ENCODE measurements at regions of chr1 and their contacts with region 1.

Region 1: DNA sequence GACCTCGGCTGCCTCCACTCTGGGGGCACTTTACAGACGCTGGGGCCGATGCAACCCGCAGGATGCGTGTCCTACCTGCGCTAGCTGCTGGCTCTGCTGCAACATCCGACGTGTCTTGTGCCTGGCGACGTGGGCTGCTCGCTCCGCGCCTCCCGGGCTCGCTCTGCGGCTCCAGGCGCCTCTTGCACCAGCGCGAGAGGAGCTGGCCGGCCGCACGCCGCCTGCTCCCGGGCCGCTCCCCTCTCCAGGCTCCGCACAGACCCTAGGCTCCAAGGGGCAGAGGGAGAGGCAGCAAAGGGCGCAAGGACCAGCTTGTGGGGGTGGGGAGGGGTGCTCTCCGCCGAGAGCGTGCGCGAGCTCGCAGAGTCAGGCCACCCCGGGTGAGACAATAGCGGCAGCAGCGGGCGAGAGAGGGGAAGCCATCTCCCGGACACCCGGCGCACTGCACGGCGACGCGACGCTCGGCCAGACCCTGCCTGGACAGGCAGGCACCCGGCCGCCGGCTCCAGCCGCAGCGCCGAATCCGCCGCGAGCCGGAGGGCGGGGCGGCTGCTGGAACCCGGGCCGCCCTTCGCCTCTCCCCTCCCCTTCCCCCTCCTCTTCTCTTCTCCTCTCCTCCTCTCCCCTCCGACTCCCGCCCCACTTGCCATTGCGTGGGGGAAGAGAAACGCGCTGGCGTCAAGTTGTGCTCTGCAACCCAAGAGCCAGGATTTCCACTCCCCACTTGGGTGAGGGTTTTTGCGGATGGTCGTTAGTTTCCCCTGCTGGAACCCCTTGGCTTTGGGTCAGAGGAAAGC is at the start of gene PIK3C2B:
- DNase-seq: peak; percentile 80 to 84
- H3K4me3 ChIP-seq: peak within 1 kb of the TSS; percentile 94
- H3K27ac ChIP-seq: peak within 1 kb of the TSS; percentile 92
- H3K4me1 ChIP-seq: peaks cover 34% of the 10 kb centered on the region
- H3K27me3 ChIP-seq: no peaks in the 10 kb centered on the region
- CTCF ChIP-seq: peak; percentile 55; the same call in 1 of the 2 replicates
- total RNA-seq, gene PIK3C2B: 51.6 and 52.4 TPM in 2 replicates

Region 2: DNA sequence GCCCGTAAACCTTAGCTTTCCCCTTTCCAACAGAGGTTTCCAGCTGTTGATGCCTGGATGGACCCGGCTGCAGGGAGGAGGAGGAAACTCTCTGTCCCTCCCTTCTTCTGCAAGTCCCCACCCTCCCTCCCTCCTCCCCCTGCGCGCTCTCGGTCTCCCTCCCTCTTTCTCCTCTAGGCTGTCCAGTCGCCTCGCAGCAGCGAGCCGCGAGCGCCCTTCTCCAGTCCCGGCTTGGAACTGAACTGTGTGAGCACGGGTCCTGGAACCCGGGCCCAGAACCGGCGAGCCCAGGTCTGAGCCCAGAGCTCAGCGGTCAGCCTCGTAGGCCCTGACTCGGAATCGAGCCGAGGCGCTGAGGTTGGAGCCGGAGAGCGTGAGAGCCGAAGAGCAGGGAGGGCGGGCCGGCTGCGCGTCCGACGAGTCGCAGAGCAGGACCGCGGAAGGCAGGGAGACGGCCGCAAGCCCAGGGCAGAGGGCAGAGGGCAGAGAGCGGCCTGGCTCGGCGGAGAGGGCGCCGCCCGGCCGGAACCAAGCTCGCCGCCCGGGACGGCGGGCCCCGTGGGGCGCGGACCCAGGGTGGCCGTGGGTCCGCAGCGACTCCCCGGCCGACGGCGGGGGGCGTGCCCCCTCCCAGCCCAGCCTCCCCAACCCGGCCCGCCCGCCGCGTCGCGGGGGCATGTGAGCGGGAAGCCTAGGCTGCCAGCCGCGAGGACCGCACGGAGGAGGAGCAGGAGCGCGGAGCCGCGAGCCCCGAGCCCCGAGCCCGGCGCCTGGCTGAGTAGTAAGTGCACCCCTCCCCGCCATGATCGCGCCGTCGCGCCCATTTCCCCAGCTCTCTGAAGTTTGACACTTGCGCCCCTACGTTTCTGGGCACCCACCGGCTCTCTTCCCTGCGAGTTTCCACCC is 421.3 kb before region 1 on chr1 and contains the start of gene SOX13:
- CTCF ChIA-PET with region 1: no interaction called
- POLR2A ChIA-PET with region 1: no interaction called
- intact Hi-C with region 1: loop called (anchors 10 kb)
- DNase-seq: peak; percentile 63 to 83
- H3K4me3 ChIP-seq: peak within 1 kb of the TSS; percentile 96
- H3K27ac ChIP-seq: peak within 1 kb of the TSS; percentile 52
- H3K4me1 ChIP-seq: peaks cover 30% of the 10 kb centered on the region
- H3K27me3 ChIP-seq: no peaks in the 10 kb centered on the region
- CTCF ChIP-seq: peak; percentile 48
- total RNA-seq, gene SOX13: 89.9 and 102 TPM in 2 replicates

Region 3: GRCh38 chr1:204411451-204412204 is 82.9 kb before region 1 on chr1 and contains the start of gene PPP1R15B:
- CTCF ChIA-PET with region 1: interaction called, 4 read pairs
- POLR2A ChIA-PET with region 1: no interaction called
- intact Hi-C with region 1: loop called (anchors 2 kb)
- DNase-seq: peak; percentile 97
- H3K4me3 ChIP-seq: peak within 1 kb of the TSS; percentile 94
- H3K27ac ChIP-seq: peak within 1 kb of the TSS; percentile 89
- H3K4me1 ChIP-seq: peaks cover 28% of the 10 kb centered on the region
- H3K27me3 ChIP-seq: no peaks in the 10 kb centered on the region
- CTCF ChIP-seq: no peak
- total RNA-seq, gene PPP1R15B: 37.3 and 40.9 TPM in 2 replicates

Region 4: GRCh38 chr1:204438628-204439027 is 55.9 kb before region 1 on chr1:
- CTCF ChIA-PET with region 1: interaction called, 5 read pairs
- POLR2A ChIA-PET with region 1: interaction called, 3 read pairs
- intact Hi-C with region 1: loop called (anchors 2 kb)
- DNase-seq: peak; percentile 77 to 99
- H3K4me3 ChIP-seq: peak overlapping the region; percentile 13; the same call in 1 of the 2 replicates
- H3K27ac ChIP-seq: peak overlapping the region; percentile 89
- H3K4me1 ChIP-seq: peaks cover 90% of the 10 kb centered on the region
- H3K27me3 ChIP-seq: no peaks in the 10 kb centered on the region
- CTCF ChIP-seq: no peak

Region 5: GRCh38 chr1:204453141-204453772 is 41.2 kb before region 1 on chr1:
- CTCF ChIA-PET with region 1: interaction called, 27 read pairs
- POLR2A ChIA-PET with region 1: interaction called, 25 read pairs
- intact Hi-C with region 1: loop called (anchors 1 kb)
- DNase-seq: no peak
- H3K4me3 ChIP-seq: no peak overlapping the region
- H3K27ac ChIP-seq: no peak overlapping the region; the same call in 1 of the 2 replicates
- H3K4me1 ChIP-seq: peaks cover 48% of the 10 kb centered on the region
- H3K27me3 ChIP-seq: no peaks in the 10 kb centered on the region
- CTCF ChIP-seq: no peak

Region 6: DNA sequence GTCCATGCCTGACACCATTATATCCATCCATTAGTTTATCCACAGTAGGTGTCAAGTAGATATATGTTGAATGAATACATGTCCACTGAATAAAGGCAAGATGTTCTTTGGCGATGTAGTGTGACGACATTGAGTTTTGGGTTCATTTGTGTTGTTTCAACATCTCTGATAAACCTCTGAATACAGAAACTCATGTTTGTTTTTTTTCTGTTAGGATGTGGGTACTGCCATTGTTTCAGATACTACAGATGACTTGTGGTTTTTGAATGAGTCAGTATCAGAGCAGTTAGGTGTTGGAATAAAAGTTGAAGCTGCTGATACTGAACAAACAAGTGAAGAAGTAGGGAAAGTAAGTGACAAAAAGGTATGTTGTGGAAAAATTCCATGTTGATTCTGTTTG is 49.8 kb after region 1 on chr1:
- CTCF ChIA-PET with region 1: no interaction called
- POLR2A ChIA-PET with region 1: no interaction called
- intact Hi-C with region 1: no loop called
- DNase-seq: no peak
- H3K4me3 ChIP-seq: no peak overlapping the region
- H3K27ac ChIP-seq: no peak overlapping the region
- H3K4me1 ChIP-seq: no peaks in the 10 kb centered on the region
- H3K27me3 ChIP-seq: no peaks in the 10 kb centered on the region
- CTCF ChIP-seq: no peak

Measured in PC-9 (cell line).